Activated T-helper 1 cell treated with anti-CD3 and anti-CD28 coated beads, Interleukin-12 subunit alpha, Interleukin-12 subunit beta, Interleukin-2, Interleukin-4 antibody, amounts not matched to agents 30 ng/mL and 10 ng/mL and 1 ng/mL, durations not matched to agents 14 hours and 24 hours and 36 hours (primary cell): ENCODE measurements at regions of chr9 and their contacts with region 1.

Region 1: DNA sequence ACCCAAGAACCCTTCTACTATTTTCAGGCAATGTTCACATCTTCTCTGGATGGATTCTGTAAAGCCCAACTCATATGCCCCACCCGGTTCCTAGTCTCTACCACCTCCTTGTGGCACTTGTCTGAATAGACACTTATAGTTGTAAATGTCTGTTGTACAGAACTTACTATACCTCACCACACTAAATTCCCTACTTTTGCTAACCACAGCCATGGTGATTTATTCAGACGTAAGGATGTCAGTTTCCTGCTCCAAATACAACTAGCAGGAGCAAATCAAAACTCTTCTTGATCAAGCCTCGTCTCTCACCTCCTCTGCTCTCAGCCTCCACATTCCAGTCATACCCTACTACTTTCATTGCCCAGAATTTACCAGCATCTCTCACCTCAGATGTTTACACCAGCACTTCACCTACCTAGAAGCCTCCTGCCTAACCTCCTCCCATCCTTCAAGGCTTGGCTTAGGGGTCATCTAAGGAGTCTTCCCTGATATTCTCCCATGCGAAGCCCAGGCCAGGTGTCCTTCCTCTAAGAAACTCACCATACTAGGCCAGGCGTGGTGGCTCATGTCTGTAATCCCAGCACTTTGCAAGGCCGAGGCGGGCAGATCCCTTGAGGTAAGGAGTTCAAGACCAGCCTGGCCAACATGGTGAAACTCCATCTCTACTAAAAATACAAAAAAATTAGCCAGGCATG is 75.5 kb downstream of the MAPKAP1 start:
- DNase-seq: peak; percentile 14
- H3K4me3 Mint-ChIP-seq: peak overlapping the region; percentile 55
- H3K27ac Mint-ChIP-seq: peak overlapping the region; percentile 76
- H3K4me1 Mint-ChIP-seq: peaks cover 58% of the 10 kb centered on the region
- H3K27me3 Mint-ChIP-seq: no peaks in the 10 kb centered on the region

Region 2: DNA sequence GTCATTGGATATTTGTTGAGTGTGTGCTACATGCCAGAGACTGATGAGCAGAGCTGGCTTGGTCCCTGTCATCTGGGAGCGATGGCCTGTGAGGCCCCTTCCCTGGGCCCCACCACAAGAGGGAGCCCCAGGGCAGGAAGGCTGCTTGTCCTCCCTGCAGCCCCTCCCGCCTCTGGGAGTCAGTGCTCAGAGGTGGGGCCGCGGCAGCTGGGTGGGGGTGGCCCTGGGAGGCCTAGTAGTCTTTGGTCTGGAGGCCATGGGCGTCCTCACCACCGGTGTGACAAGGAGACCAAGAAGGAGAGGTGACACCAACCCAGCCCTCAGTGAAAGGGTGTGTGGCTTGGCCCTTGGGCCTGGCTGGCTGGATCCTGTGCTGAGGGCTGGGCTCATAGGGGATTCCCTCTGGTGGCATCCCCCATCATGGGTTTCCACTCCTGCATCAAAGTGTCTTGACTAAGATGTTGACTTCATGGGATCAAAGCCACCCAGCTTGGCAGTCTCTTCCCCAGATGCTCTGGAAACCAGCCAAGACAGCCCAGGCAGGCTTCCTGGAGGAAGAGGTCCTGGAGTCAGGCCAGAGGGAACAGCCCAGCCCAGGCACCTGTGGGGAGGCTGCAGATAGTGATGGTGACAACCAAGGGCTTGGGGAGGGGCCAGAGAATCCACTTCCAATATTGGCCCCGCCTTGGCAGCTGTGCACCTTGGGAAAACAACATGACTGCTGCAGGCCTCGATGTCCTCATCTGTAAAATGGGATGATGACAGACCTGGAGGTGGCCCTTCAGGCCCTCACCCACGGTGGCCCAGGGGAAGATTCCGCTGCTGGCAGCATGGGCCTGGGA is 203.3 kb before region 1 on chr9:
- intact Hi-C with region 1: loop called (anchors 1 kb)
- DNase-seq: no peak
- H3K4me3 Mint-ChIP-seq: no peak overlapping the region
- H3K27ac Mint-ChIP-seq: no peak overlapping the region
- H3K4me1 Mint-ChIP-seq: no peaks in the 10 kb centered on the region
- H3K27me3 Mint-ChIP-seq: no peaks in the 10 kb centered on the region

Region 3: DNA sequence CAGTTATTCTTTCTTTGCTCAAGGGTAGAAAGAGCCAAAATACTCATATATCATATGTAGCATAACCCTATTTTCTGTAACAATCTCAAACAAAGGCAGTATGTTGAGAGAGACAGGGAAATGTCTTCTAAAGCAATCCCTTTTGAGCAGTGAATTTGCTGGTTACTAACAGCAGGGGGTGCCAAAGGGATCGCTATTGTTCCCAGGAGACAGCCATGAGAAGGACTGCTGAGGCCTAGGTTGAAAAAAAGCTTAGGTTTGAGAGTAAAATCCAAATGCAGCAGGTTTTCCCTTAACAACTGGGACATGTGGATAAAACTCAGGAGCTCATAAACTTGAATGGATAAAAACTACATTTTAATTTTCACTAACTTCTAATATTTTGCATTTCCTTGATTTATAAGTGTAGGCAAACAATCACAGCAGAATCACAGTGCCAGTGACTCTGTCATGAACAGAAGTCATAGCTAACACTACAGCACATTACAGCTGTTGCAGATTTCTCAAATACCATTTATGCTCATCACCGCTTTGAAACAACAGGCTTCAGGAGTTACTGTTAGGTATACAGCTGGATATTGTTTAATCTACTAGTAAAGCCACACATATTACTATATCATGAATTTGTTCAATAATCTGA is 73.0 kb before region 1 on chr9:
- intact Hi-C with region 1: loop called (anchors 1 kb)
- DNase-seq: peak; percentile 31
- H3K4me3 Mint-ChIP-seq: no peak overlapping the region
- H3K27ac Mint-ChIP-seq: no peak overlapping the region
- H3K4me1 Mint-ChIP-seq: peaks cover 18% of the 10 kb centered on the region
- H3K27me3 Mint-ChIP-seq: no peaks in the 10 kb centered on the region

Region 4: GRCh38 chr9:125663127-125663526 is 31.6 kb after region 1 on chr9:
- intact Hi-C with region 1: loop called (anchors 1 kb)
- DNase-seq: no peak
- H3K4me3 Mint-ChIP-seq: no peak overlapping the region
- H3K27ac Mint-ChIP-seq: peak overlapping the region; percentile 46
- H3K4me1 Mint-ChIP-seq: peaks cover 10% of the 10 kb centered on the region
- H3K27me3 Mint-ChIP-seq: no peaks in the 10 kb centered on the region

Region 5: GRCh38 chr9:125706661-125707471 is 75.3 kb after region 1 on chr9 and contains the start of gene MAPKAP1:
- intact Hi-C with region 1: loop called (anchors 1 kb)
- DNase-seq: peak; percentile 93
- H3K4me3 Mint-ChIP-seq: peak within 1 kb of the TSS; percentile 79
- H3K27ac Mint-ChIP-seq: peak within 1 kb of the TSS; percentile 77
- H3K4me1 Mint-ChIP-seq: peaks cover 34% of the 10 kb centered on the region
- H3K27me3 Mint-ChIP-seq: no peaks in the 10 kb centered on the region
- total RNA-seq, gene MAPKAP1: 103 and 108 TPM in 2 replicates

Region 6: GRCh38 chr9:125854553-125855275 is 223.2 kb after region 1 on chr9:
- intact Hi-C with region 1: loop called (anchors 1 kb)
- DNase-seq: no peak
- H3K4me3 Mint-ChIP-seq: no peak overlapping the region
- H3K27ac Mint-ChIP-seq: no peak overlapping the region
- H3K4me1 Mint-ChIP-seq: peaks cover 7% of the 10 kb centered on the region
- H3K27me3 Mint-ChIP-seq: no peaks in the 10 kb centered on the region